Vagina (tissue), 2 donors: ENCODE measurements at regions of chr14 and their contacts with region 1.

Region 1: DNA sequence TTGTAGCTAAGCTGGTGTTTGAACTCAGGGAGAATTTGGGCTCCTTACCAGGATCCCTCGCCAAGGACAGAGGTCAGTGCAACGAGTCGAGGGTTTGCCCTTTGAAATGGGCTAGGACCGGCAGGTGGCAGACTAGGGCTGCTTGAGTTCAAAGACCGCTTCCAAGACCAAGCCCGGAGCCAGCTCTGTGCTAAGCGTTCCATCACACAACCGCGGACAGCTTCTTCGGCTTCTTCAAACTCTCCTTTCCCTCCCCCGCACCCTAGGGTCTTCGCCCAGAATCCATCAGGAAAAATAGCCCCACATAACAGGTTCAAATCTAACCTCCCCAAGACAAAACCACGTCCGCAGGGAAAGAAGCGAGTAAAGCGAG is 705 bp upstream of the FLVCR2 start:
- DNase-seq: peak in 1 of 2 donors; percentile 94
- H3K4me3 ChIP-seq: peak overlapping the region; percentile 60 to 64
- H3K27ac ChIP-seq: peak overlapping the region; percentile 85
- H3K4me1 ChIP-seq: peaks cover 28% of the 10 kb centered on the region
- H3K27me3 ChIP-seq: no peaks in the 10 kb centered on the region
- CTCF ChIP-seq: peak; percentile 48 to 85 (median 76)
- POLR2A ChIP-seq: no peak

Region 2: DNA sequence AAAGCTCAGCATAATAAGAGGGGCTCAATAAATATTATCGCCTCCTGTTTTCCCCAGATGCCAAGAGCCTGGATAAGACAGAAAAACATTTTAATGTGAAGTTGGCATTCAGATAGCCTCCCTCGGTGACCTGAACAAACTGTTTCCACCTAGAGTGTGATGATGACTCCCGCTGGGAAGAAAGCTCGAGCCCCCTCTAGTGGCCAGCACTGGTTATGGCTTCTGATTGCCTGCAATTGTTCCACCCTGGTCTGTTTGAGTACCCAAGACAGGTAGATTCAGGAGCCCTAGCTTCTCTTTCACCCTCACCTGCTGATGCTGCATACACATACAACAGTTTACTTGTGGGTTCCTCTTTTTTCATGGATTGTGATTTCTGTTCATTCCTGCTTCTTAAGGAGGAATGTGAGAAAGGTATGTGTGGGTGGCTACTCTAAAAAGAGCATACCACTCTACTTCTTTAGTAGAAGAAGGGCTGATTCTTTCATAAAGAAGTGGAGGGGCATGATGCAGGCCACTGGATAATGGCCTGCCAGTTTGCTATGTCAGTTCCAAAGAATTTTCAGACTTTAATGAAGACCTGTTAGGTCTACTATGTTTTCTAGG is 76.5 kb after region 1 on chr14:
- intact Hi-C with region 1: loop called (anchors 5 kb)
- DNase-seq: no peak
- H3K4me3 ChIP-seq: no peak overlapping the region
- H3K27ac ChIP-seq: no peak overlapping the region
- H3K4me1 ChIP-seq: no peaks in the 10 kb centered on the region
- H3K27me3 ChIP-seq: no peaks in the 10 kb centered on the region
- CTCF ChIP-seq: peak; percentile 79 to 93 (median 86)
- POLR2A ChIP-seq: no peak

Region 3: DNA sequence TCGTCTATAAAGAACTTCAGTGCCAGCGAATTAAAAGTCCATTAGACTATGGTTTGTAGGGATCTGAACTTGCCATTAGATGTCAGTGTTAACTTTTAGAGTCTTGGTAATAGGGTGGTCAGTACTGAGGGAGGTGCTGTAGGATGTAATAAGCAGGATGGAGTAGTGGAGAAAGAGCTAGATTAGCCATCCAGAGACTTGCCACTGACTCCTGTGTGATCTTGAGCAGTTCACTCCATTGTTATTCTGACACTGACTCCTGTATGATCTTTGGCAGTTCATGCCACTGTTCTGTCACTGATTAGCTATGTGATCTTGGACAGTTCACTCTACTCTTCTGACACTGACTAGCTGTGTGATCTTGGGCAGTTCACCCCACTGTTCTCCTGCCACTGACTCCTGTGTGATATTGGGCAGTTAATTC is 216.9 kb after region 1 on chr14:
- intact Hi-C with region 1: no loop called
- DNase-seq: no peak
- H3K4me3 ChIP-seq: no peak overlapping the region
- H3K27ac ChIP-seq: no peak overlapping the region
- H3K4me1 ChIP-seq: no peaks in the 10 kb centered on the region
- H3K27me3 ChIP-seq: no peaks in the 10 kb centered on the region
- CTCF ChIP-seq: peak in 1 of 3 experiments; percentile 20
- POLR2A ChIP-seq: no peak